ENCODE measurements at regions of chr1 and their contacts with region 1.

Region 1: GRCh38 chr1:55347866-55348265 is 132.7 kb upstream of the USP24 start:
- DNase-seq: no peak
- ATAC-seq: no peak
- H3K4me3 ChIP-seq: no peak overlapping the region
- H3K4me3 Mint-ChIP-seq: no peak overlapping the region
- H3K27ac ChIP-seq: no peak overlapping the region
- H3K27ac Mint-ChIP-seq: no peak overlapping the region
- H3K4me1 ChIP-seq: no peaks in the 10 kb centered on the region
- H3K4me1 Mint-ChIP-seq: no peaks in the 10 kb centered on the region
- H3K27me3 ChIP-seq: no peaks in the 10 kb centered on the region
- H3K27me3 Mint-ChIP-seq: peaks cover 12% of the 10 kb centered on the region
- CTCF ChIP-seq: no peak

Region 2: GRCh38 chr1:55781944-55782482 is 434.1 kb after region 1 on chr1:
- CTCF ChIA-PET with region 1: no interaction called
- POLR2A ChIA-PET with region 1: no interaction called
- intact Hi-C with region 1: loop called in 1 of 2 experiments (anchors 10 kb)
- DNase-seq: no peak
- ATAC-seq: no peak
- H3K4me3 ChIP-seq: no peak overlapping the region
- H3K4me3 Mint-ChIP-seq: no peak overlapping the region
- H3K27ac ChIP-seq: no peak overlapping the region
- H3K27ac Mint-ChIP-seq: no peak overlapping the region
- H3K4me1 ChIP-seq: no peaks in the 10 kb centered on the region
- H3K4me1 Mint-ChIP-seq: no peaks in the 10 kb centered on the region
- H3K27me3 ChIP-seq: no peaks in the 10 kb centered on the region
- H3K27me3 Mint-ChIP-seq: peaks cover under 1% of the 10 kb centered on the region
- CTCF ChIP-seq: no peak